Activated T-helper 2 cell treated with anti-CD3 and anti-CD28 coated beads, Interferon-gamma antibody, Interleukin-2, Interleukin-4, amounts not matched to agents 10 μg/mL and 5 μg/mL and 100 μg/mL, durations not matched to agents 14 hours and 24 hours and 36 hours (primary cell): ENCODE measurements at regions of chr2 and their contacts with region 1.

Region 1: GRCh38 chr2:196926562-196927375 is at the start of gene PGAP1:
- DNase-seq: peak; percentile 84
- H3K4me3 Mint-ChIP-seq: peak within 1 kb of the TSS; percentile 100
- H3K27ac Mint-ChIP-seq: peak within 1 kb of the TSS; percentile 99
- H3K4me1 Mint-ChIP-seq: peaks cover 35% of the 10 kb centered on the region
- H3K27me3 Mint-ChIP-seq: no peaks in the 10 kb centered on the region
- total RNA-seq, gene PGAP1: 31.2 and 31.4 TPM in 2 replicates

Region 2: GRCh38 chr2:196742685-196743084 is 184.1 kb before region 1 on chr2:
- intact Hi-C with region 1: no loop called
- DNase-seq: no peak
- H3K4me3 Mint-ChIP-seq: no peak overlapping the region
- H3K27ac Mint-ChIP-seq: no peak overlapping the region
- H3K4me1 Mint-ChIP-seq: no peaks in the 10 kb centered on the region
- H3K27me3 Mint-ChIP-seq: no peaks in the 10 kb centered on the region

Region 3: DNA sequence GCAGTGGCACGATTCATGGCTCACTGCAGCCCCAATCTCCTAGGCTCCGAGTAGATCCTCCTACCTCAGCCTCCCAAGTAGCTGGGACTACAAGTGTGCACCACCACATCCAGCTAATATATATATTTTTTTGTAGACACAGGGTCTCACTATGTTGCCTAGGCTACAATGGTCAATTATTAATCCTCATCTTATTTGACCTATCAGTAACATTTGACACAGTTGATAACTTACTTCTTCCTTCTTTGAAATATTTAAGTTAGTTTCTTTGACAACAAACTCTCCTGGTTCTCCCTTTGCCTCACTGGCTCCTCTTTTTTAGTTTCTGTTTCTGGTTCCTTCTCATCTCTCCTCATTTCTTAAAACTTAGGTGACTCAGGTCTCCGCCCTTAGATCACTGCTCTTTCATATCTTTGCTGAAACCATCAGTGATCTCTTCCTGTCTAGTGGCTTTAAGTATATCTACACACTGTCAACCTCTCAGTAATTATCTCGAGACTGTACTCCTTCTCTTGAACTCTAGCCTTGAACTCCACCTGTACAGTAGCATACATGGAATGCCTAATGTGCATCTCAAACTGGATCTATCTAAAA is 11.8 kb before region 1 on chr2:
- intact Hi-C with region 1: loop called (anchors 1 kb)
- DNase-seq: peak; percentile 33
- H3K4me3 Mint-ChIP-seq: peak overlapping the region; percentile 63
- H3K27ac Mint-ChIP-seq: peak overlapping the region; percentile 94
- H3K4me1 Mint-ChIP-seq: peaks cover 37% of the 10 kb centered on the region
- H3K27me3 Mint-ChIP-seq: no peaks in the 10 kb centered on the region

Region 4: DNA sequence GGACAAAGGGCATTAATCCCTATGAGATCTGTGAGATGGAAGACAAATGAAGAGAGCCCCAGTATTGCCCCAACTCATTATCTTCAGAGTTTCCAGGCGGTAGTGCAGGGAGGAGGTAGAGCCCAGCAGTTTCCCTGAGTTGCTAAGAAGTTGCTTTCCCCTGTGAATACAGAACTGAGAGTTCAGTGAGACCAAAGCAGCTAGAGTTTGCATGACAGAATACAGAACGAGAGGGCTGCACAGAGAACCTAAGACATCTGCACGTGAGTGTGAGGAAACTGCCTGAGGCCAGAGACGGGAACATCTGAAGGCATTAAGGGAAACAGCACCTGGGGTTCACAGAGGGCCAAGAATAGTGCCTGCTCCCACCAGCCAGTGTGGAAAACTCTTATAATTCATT is 17.8 kb after region 1 on chr2:
- intact Hi-C with region 1: no loop called
- DNase-seq: no peak
- H3K4me3 Mint-ChIP-seq: no peak overlapping the region
- H3K27ac Mint-ChIP-seq: no peak overlapping the region
- H3K4me1 Mint-ChIP-seq: peaks cover 7% of the 10 kb centered on the region
- H3K27me3 Mint-ChIP-seq: no peaks in the 10 kb centered on the region

Region 5: DNA sequence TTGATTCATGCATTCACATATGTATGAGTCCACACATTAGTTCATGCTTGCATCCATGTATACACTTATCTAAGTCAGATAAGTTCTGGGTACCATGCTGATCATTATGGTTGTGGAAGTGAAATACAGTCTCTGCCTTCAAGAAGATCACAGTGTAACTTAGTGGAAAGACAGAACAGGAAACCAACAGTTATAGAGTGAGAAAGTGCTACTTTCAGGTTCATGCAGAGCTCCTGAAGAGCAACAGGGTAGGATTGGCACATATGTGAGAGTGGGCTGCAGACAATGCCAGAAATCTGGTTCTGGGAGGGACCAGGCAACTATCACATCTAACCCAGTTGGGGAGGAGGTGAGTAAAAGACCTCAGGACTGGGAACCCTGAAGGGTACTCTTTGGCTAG is 35.1 kb after region 1 on chr2:
- intact Hi-C with region 1: loop called (anchors 1 kb)
- DNase-seq: no peak
- H3K4me3 Mint-ChIP-seq: no peak overlapping the region
- H3K27ac Mint-ChIP-seq: peak overlapping the region; percentile 72
- H3K4me1 Mint-ChIP-seq: peaks cover 34% of the 10 kb centered on the region
- H3K27me3 Mint-ChIP-seq: no peaks in the 10 kb centered on the region

Region 6: GRCh38 chr2:196974970-196975369 is 48.2 kb after region 1 on chr2:
- intact Hi-C with region 1: loop called (anchors 1 kb)
- DNase-seq: no peak
- H3K4me3 Mint-ChIP-seq: no peak overlapping the region
- H3K27ac Mint-ChIP-seq: peak overlapping the region; percentile 10
- H3K4me1 Mint-ChIP-seq: peaks cover 26% of the 10 kb centered on the region
- H3K27me3 Mint-ChIP-seq: no peaks in the 10 kb centered on the region

Region 7: GRCh38 chr2:196987649-196988364 is 61.0 kb after region 1 on chr2:
- intact Hi-C with region 1: loop called (anchors 1 kb)
- DNase-seq: peak; percentile 35
- H3K4me3 Mint-ChIP-seq: peak overlapping the region; percentile 54
- H3K27ac Mint-ChIP-seq: peak overlapping the region; percentile 86
- H3K4me1 Mint-ChIP-seq: peaks cover 57% of the 10 kb centered on the region
- H3K27me3 Mint-ChIP-seq: no peaks in the 10 kb centered on the region

Region 8: GRCh38 chr2:197145471-197146138 is 218.8 kb after region 1 on chr2:
- intact Hi-C with region 1: no loop called
- DNase-seq: no peak
- H3K4me3 Mint-ChIP-seq: no peak overlapping the region
- H3K27ac Mint-ChIP-seq: peak overlapping the region; percentile 80
- H3K4me1 Mint-ChIP-seq: peaks cover 58% of the 10 kb centered on the region
- H3K27me3 Mint-ChIP-seq: no peaks in the 10 kb centered on the region

Region 9: DNA sequence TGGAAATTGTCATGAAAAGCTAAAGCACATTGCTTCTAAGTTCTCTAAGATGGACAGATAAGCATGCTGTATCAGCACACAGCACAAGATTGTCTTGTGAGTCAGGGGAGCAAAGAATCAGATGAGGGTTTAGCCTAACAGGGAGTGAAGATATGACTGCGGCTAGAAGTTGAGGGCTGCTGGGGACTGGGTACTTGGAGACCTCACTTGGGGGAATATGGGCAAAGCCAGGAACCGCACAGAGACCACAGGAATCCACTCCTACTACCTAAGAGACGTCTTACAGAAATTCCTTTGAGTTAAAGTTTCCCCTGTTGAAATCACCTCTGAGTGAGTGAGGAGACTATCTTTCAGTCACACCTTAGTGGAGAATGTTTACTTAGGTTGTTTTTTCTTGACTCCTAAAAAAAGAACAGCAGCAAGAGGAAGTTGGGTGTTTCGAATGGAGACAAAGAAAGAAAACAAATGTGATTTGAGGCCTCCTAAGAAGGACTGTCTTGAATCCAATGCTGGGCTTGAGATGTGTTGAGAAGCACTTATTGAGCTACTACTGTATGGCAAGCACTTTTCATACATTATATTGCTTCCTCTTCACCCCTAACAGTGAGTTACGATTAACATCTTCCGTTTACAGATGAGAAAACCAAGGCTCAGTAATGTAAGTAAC is 283.1 kb after region 1 on chr2:
- intact Hi-C with region 1: loop called (anchors 5 kb)
- DNase-seq: peak; percentile 43
- H3K4me3 Mint-ChIP-seq: peak overlapping the region; percentile 60
- H3K27ac Mint-ChIP-seq: peak overlapping the region; percentile 90
- H3K4me1 Mint-ChIP-seq: peaks cover 92% of the 10 kb centered on the region
- H3K27me3 Mint-ChIP-seq: no peaks in the 10 kb centered on the region